ENCODE measurements at regions of chr22 and their contacts with region 1.

Region 1: DNA sequence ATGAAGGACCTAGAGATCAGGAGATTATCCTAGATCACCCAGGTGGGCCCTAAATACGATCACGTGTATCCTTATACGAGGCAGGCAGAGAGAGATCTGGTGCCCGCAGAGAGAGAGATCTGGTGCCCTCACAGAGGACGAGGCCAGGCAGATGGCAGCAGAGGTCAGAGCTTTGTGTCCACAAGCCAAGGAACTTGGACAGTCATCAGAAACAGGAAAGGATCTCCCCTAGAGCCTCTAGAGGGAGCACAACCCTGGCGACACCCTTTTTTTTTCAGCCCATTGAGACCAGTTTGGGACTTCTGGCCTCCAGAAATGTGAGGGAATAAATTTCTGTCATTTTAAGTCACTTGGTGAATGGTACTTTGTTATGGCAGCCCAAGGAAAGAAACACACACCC is 25.5 kb upstream of the TIMP3 start:
- DNase-seq: peak; percentile 50 to 58
- H3K4me3 ChIP-seq: no peak overlapping the region
- H3K4me3 Mint-ChIP-seq: no peak overlapping the region
- H3K27ac Mint-ChIP-seq: no peak overlapping the region
- H3K4me1 ChIP-seq: peaks cover 11% of the 10 kb centered on the region
- H3K4me1 Mint-ChIP-seq: peaks cover 12% of the 10 kb centered on the region
- H3K27me3 ChIP-seq: no peaks in the 10 kb centered on the region
- H3K27me3 Mint-ChIP-seq: no peaks in the 10 kb centered on the region
- CTCF ChIP-seq: peak; percentile 61 to 71

Region 2: DNA sequence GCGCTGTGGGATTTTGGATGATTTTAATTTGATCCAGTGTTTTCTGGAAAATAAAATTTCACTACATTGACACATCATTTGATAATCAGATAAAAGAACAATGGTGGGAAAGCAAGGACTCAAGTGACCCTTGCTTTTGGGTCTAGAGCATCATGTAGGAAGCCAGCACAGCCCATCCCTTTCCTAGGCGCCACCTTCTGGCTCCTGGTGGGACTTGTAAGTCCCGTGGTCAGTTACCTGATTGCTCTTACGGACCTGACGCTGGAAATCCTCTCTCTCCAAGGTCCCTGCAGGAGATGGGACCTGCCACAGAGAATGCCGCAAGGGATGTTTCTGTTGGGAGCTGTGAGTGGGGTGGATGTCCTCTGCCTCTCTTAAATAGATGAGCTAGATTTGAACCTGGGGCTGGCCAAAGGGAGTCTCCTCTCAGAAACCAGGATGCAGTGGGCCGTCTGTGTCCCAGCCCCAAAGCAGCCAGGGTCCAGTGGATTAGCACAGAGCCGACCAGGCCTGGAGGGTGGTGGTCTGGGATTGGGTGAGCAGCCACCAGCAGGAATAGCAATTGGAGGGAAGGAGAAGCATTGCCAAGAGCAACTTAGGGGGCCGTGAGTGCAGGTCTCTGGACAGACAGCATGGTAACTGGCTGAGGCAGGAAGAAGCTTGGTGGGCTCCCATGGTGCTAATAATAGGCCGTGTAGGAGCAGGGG is 47.2 kb after region 1 on chr22:
- CTCF ChIA-PET with region 1: no interaction called
- POLR2A ChIA-PET with region 1: no interaction called
- intact Hi-C with region 1: loop called (anchors 1 kb)
- DNase-seq: peak; percentile 67
- H3K4me3 ChIP-seq: no peak overlapping the region
- H3K4me3 Mint-ChIP-seq: no peak overlapping the region
- H3K27ac Mint-ChIP-seq: no peak overlapping the region
- H3K4me1 ChIP-seq: no peaks in the 10 kb centered on the region
- H3K4me1 Mint-ChIP-seq: peaks cover 6% of the 10 kb centered on the region
- H3K27me3 ChIP-seq: no peaks in the 10 kb centered on the region
- H3K27me3 Mint-ChIP-seq: no peaks in the 10 kb centered on the region
- CTCF ChIP-seq: peak; percentile 59 to 67

Measured in Caco-2 (cell line).